ENCODE measurements at regions of chr13 and their contacts with region 1.

Region 1: GRCh38 chr13:98869408-98870090 is 108.3 kb downstream of the DOCK9 start:
- DNase-seq: peak in 1 of 9 experiments; percentile 14
- ATAC-seq: no peak
- H3K4me3 ChIP-seq: no peak overlapping the region
- H3K4me3 Mint-ChIP-seq: no peak overlapping the region
- H3K27ac ChIP-seq: no peak overlapping the region
- H3K27ac Mint-ChIP-seq: no peak overlapping the region
- H3K4me1 ChIP-seq: no peaks in the 10 kb centered on the region
- H3K4me1 Mint-ChIP-seq: peaks cover 7% of the 10 kb centered on the region
- H3K27me3 ChIP-seq: no peaks in the 10 kb centered on the region
- H3K27me3 Mint-ChIP-seq: no peaks in the 10 kb centered on the region
- CTCF ChIP-seq: no peak

Region 2: DNA sequence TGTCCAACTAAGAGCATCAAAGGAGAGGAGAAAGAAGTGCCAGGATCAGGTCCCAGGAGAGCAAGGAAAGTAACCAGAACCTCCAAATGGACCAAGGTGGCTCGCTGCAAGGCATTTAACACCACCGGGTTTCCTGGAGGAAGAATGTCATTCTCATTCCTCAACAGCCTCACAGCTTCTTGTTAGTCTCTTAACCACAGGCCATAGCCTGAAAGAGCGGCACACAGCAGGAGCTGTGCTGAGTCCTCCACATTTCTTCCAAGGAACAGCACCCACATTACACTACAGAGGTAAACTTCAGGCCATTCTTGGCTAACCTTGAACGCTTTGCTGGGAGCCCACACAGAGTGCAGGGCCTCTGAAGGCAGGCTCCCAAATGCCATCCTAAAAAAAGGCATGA is 84.8 kb after region 1 on chr13:
- CTCF ChIA-PET with region 1: no interaction called
- POLR2A ChIA-PET with region 1: no interaction called
- intact Hi-C with region 1: loop called in 1 of 2 experiments (anchors 5 kb)
- DNase-seq: no peak
- ATAC-seq: no peak
- H3K4me3 ChIP-seq: no peak overlapping the region
- H3K4me3 Mint-ChIP-seq: no peak overlapping the region
- H3K27ac ChIP-seq: no peak overlapping the region
- H3K27ac Mint-ChIP-seq: peak overlapping the region; percentile 37
- H3K4me1 ChIP-seq: no peaks in the 10 kb centered on the region
- H3K4me1 Mint-ChIP-seq: peaks cover 27% of the 10 kb centered on the region
- H3K27me3 ChIP-seq: no peaks in the 10 kb centered on the region
- H3K27me3 Mint-ChIP-seq: no peaks in the 10 kb centered on the region
- CTCF ChIP-seq: no peak

Region 3: DNA sequence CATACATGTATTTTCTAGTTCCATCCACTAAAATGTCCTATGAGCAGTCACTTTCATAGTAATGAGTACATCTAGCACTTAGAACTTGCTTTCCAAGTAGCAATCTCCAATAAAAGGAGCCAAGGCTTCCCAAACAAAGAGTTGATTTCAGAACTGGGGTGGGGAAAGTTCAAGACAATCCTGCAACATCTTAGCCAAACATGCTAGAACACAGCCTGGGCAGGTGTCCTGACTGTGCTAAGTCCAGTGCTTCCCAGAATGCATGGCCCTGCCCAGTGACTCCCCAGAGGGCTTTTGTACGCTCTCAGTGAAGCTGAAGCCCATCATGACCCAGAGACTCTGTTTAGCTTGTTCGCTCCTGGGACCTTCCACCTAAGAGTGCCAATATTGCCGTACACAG is 224.4 kb after region 1 on chr13:
- CTCF ChIA-PET with region 1: no interaction called
- POLR2A ChIA-PET with region 1: no interaction called
- intact Hi-C with region 1: no loop called
- DNase-seq: no peak
- ATAC-seq: no peak
- H3K4me3 ChIP-seq: no peak overlapping the region
- H3K4me3 Mint-ChIP-seq: no peak overlapping the region
- H3K27ac ChIP-seq: no peak overlapping the region
- H3K27ac Mint-ChIP-seq: no peak overlapping the region
- H3K4me1 ChIP-seq: peaks cover 1% of the 10 kb centered on the region
- H3K4me1 Mint-ChIP-seq: peaks cover 3% of the 10 kb centered on the region
- H3K27me3 ChIP-seq: no peaks in the 10 kb centered on the region
- H3K27me3 Mint-ChIP-seq: no peaks in the 10 kb centered on the region
- CTCF ChIP-seq: no peak

Measured in CD8-positive, alpha-beta T cell (primary cell).